ENCODE measurements at regions of chr3 and their contacts with region 1.

Region 1: GRCh38 chr3:42101048-42101447 is 9.9 kb downstream of the TRAK1 start:
- DNase-seq: peak; percentile 73
- H3K4me3 Mint-ChIP-seq: no peak overlapping the region
- H3K27ac Mint-ChIP-seq: peak overlapping the region; percentile 88
- H3K4me1 Mint-ChIP-seq: peaks cover 49% of the 10 kb centered on the region
- H3K27me3 Mint-ChIP-seq: no peaks in the 10 kb centered on the region
- CTCF ChIP-seq: no peak

Region 2: DNA sequence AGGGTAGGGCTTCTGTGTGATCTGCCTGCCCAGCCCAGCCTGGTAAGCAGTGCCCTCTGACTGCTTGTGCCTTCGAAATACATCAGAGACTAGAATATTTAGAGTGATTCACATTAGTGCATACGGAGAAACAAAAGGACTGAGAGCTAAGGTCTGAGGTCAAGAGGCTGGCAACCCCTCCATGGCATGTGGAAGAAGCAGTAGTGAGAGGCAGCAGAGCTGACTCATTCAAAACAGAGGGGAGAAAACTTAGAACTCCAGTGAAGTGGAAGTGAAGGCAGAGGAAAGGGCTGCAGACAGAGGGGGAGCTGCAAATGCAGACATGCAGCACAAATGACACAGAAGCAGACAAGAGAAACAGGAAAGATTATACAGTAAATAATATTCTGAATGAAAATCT is 200.8 kb before region 1 on chr3:
- CTCF ChIA-PET with region 1: interaction called, 118 read pairs
- POLR2A ChIA-PET with region 1: interaction called, 8 read pairs
- intact Hi-C with region 1: no loop called
- DNase-seq: peak; percentile 0
- H3K4me3 Mint-ChIP-seq: no peak overlapping the region
- H3K27ac Mint-ChIP-seq: no peak overlapping the region
- H3K4me1 Mint-ChIP-seq: no peaks in the 10 kb centered on the region
- H3K27me3 Mint-ChIP-seq: no peaks in the 10 kb centered on the region
- CTCF ChIP-seq: no peak

Region 3: GRCh38 chr3:42012935-42013690 is 87.9 kb before region 1 on chr3:
- CTCF ChIA-PET with region 1: interaction called, 31 read pairs
- POLR2A ChIA-PET with region 1: interaction called, 5 read pairs
- intact Hi-C with region 1: loop called (anchors 1 kb)
- DNase-seq: peak; percentile 59
- H3K4me3 Mint-ChIP-seq: peak overlapping the region; percentile 78
- H3K27ac Mint-ChIP-seq: no peak overlapping the region
- H3K4me1 Mint-ChIP-seq: peaks cover 24% of the 10 kb centered on the region
- H3K27me3 Mint-ChIP-seq: no peaks in the 10 kb centered on the region
- CTCF ChIP-seq: no peak

Region 4: GRCh38 chr3:42071904-42072592 is 29.0 kb before region 1 on chr3:
- CTCF ChIA-PET with region 1: interaction called, 23 read pairs
- POLR2A ChIA-PET with region 1: interaction called, 4 read pairs
- intact Hi-C with region 1: no loop called
- DNase-seq: peak; percentile 94
- H3K4me3 Mint-ChIP-seq: peak overlapping the region; percentile 50
- H3K27ac Mint-ChIP-seq: peak overlapping the region; percentile 43
- H3K4me1 Mint-ChIP-seq: peaks cover 34% of the 10 kb centered on the region
- H3K27me3 Mint-ChIP-seq: no peaks in the 10 kb centered on the region
- CTCF ChIP-seq: no peak

Region 5: DNA sequence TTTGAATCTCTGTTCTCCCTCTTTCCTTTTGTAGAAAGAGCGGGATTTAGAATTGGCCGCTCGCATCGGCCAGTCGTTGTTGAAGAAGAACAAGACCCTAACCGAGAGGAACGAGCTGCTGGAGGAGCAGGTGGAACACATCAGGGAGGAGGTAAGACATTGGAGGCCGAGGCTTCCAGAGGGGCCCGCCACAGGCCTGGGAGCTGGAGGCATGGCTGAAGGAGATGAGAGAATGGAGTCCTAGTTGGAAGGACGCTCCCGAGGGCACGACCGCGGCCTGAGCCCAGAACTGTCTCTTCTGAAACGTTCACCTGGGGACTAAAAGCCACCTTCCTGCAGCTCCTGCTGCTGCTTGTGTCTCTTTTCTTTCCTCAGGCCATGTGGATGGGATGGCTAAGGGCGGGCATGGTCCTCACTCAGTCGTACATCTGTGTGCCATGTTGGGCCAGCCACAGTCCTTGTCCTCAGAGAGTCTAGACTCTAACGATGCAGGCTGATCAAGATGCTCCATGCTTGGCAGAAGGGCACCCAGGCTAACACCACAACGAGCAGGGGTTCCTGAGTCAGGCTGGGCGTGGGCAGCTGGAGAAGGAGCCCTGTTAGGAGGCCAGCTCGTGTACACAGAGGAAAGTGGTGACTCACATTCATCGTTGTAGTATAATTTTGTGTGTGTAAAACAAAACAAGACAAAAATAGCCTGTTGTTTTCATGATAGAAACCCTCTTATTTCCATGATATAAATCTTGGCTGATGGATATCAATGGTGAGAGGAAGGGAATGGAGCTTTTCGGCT is 83.8 kb after region 1 on chr3:
- CTCF ChIA-PET with region 1: interaction called, 56 read pairs
- POLR2A ChIA-PET with region 1: no interaction called
- intact Hi-C with region 1: no loop called
- DNase-seq: peak; percentile 63
- H3K4me3 Mint-ChIP-seq: no peak overlapping the region
- H3K27ac Mint-ChIP-seq: peak overlapping the region; percentile 57
- H3K4me1 Mint-ChIP-seq: peaks cover 8% of the 10 kb centered on the region
- H3K27me3 Mint-ChIP-seq: no peaks in the 10 kb centered on the region
- CTCF ChIP-seq: no peak

Region 6: GRCh38 chr3:42376344-42376798 is 275.3 kb after region 1 on chr3:
- CTCF ChIA-PET with region 1: no interaction called
- POLR2A ChIA-PET with region 1: no interaction called
- intact Hi-C with region 1: no loop called
- DNase-seq: peak; percentile 95
- H3K4me3 Mint-ChIP-seq: no peak overlapping the region
- H3K27ac Mint-ChIP-seq: peak overlapping the region; percentile 51
- H3K4me1 Mint-ChIP-seq: peaks cover 19% of the 10 kb centered on the region
- H3K27me3 Mint-ChIP-seq: no peaks in the 10 kb centered on the region
- CTCF ChIP-seq: no peak